Dendritic cell treated with granulocyte-macrophage colony-stimulating factor and Interleukin-4, amounts not matched to agents 40 ng/mL and 50 ng/mL, for 4 days (primary cell): ENCODE measurements at regions of chr12 and their contacts with region 1.

Region 1: DNA sequence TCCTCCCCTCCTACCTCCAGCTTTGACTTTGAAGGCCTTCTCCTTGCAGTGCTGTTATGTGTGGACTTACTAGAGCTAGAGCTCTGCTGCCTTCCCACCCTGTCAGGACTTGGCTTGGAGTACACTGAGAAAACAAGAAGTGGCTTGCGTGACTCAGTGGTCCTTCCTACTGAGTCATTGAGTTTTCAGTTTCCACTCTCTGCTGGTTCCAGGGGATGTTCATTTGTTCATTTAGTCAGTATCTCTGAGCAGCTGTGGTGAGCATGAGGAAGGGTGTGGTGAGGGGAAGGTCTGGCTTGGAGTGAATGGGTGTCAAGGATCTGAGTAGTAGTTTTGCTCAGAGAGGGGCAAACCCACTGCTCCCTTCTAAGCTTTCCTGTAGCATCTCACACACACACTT is 17.2 kb upstream of the ELK3 start:
- H3K4me3 Mint-ChIP-seq: no peak overlapping the region
- H3K27ac Mint-ChIP-seq: peak overlapping the region; percentile 31
- H3K4me1 Mint-ChIP-seq: peaks cover 37% of the 10 kb centered on the region
- H3K27me3 Mint-ChIP-seq: peaks cover 7% of the 10 kb centered on the region

Region 2: DNA sequence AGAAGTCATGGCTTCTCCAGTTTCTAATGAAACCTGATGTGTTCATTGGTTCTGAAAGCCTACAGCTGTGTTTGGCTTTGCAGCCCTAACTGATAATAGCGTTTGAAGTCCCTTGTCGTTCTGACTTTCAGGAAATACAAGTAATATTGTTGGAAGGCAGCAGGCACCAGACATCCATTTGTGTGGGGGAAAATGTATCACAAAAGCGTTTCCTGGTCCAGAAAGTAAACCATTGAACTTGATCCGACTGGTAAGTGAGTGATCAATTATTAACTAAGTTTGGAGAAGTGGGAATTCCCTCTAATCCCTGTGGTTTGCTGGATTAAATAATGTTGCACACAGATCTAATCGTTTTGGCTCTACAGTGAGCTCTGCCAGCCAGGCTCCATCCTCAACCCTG is 64.3 kb before region 1 on chr12:
- intact Hi-C with region 1: no loop called
- H3K4me3 Mint-ChIP-seq: no peak overlapping the region
- H3K27ac Mint-ChIP-seq: no peak overlapping the region
- H3K4me1 Mint-ChIP-seq: peaks cover 28% of the 10 kb centered on the region
- H3K27me3 Mint-ChIP-seq: peaks cover 19% of the 10 kb centered on the region

Region 3: GRCh38 chr12:96194971-96195844 is 18.2 kb after region 1 on chr12:
- intact Hi-C with region 1: loop called (anchors 1 kb)
- H3K4me3 Mint-ChIP-seq: peak overlapping the region; percentile 91
- H3K27ac Mint-ChIP-seq: peak overlapping the region; percentile 94
- H3K4me1 Mint-ChIP-seq: peaks cover 29% of the 10 kb centered on the region
- H3K27me3 Mint-ChIP-seq: peaks cover 5% of the 10 kb centered on the region